SK-N-SH (cell line): ENCODE measurements at regions of chr16 and their contacts with region 1.

Region 1: GRCh38 chr16:55120408-55120807 is 189.7 kb downstream of the IRX5 start:
- DNase-seq: peak; percentile 50
- H3K4me3 ChIP-seq: no peak overlapping the region
- H3K27ac ChIP-seq: no peak overlapping the region
- H3K4me1 ChIP-seq: peaks cover 0 to 10% of the 10 kb centered on the region in 2 experiments; a peak in 1 of 4 replicates
- H3K27me3 ChIP-seq: no peaks in the 10 kb centered on the region
- CTCF ChIP-seq: no peak
- EP300 ChIP-seq: no peak
- RAD21 ChIP-seq: peak; percentile 79

Region 2: DNA sequence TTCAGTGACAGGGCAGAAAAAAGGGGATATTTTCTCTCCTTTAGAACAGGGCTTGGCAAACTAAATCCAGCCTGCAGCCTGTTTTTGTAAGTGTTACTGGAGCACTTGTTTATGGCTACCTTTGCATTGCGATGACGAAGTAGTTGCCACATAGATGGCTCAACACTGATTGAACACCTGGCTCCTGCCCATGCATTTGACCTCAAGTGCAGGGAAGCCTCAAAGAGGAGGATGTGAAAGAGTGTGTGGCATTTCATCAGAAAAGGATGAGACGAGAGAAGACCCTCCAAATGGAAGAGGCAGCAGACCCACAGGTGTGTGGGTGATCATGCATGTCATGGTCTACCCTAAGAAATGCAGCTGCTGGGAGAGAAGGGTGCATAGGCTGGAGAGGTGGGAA is 222.5 kb before region 1 on chr16:
- CTCF ChIA-PET with region 1: no interaction called
- POLR2A ChIA-PET with region 1: no interaction called
- DNase-seq: no peak
- H3K4me3 ChIP-seq: no peak overlapping the region
- H3K27ac ChIP-seq: no peak overlapping the region
- H3K4me1 ChIP-seq: no peaks in the 10 kb centered on the region
- H3K27me3 ChIP-seq: no peaks in the 10 kb centered on the region
- CTCF ChIP-seq: no peak
- EP300 ChIP-seq: no peak
- RAD21 ChIP-seq: no peak

Region 3: GRCh38 chr16:55056585-55057401 is 63.6 kb before region 1 on chr16:
- CTCF ChIA-PET with region 1: no interaction called
- POLR2A ChIA-PET with region 1: no interaction called
- DNase-seq: peak; percentile 87
- H3K4me3 ChIP-seq: peak overlapping the region in 1 of 2 experiments; percentile 34; a peak in 1 of 4 replicates
- H3K27ac ChIP-seq: no peak overlapping the region
- H3K4me1 ChIP-seq: peaks cover 0 to 3% of the 10 kb centered on the region in 2 experiments; a peak in 1 of 4 replicates
- H3K27me3 ChIP-seq: no peaks in the 10 kb centered on the region
- CTCF ChIP-seq: 0 out of 2 replicates have a peak, but pooled peaks have one; percentile 6
- EP300 ChIP-seq: no peak; a peak in 1 of 4 replicates
- RAD21 ChIP-seq: no peak; the same call in 1 of the 2 replicates

Region 4: DNA sequence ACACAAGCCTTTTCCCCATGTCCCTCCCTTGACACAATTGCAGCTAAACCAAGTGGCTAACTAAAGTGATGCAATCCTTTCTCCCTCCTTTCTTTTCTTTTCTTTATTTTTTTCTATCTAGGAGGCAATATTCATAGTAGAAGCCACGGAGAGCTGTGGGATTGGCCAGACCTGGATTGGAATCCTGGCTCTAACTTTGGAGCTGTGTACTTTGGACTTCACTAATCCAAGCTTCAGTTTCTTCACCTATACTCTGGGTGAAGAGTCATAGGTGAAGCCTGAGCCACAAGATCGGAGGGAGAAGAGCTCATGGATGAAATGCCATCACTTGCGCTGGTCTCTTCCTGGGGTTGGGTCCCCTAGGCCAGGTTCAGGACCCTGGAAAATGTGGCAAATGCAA is 12.6 kb before region 1 on chr16:
- CTCF ChIA-PET with region 1: interaction called, 18 read pairs
- POLR2A ChIA-PET with region 1: no interaction called
- DNase-seq: no peak
- H3K4me3 ChIP-seq: no peak overlapping the region
- H3K27ac ChIP-seq: no peak overlapping the region
- H3K4me1 ChIP-seq: peaks cover 0 to 4% of the 10 kb centered on the region in 2 experiments; a peak in 1 of 4 replicates
- H3K27me3 ChIP-seq: no peaks in the 10 kb centered on the region
- CTCF ChIP-seq: no peak
- EP300 ChIP-seq: no peak
- RAD21 ChIP-seq: no peak